Naive thymus-derived CD8-positive, alpha-beta T cell (primary cell): ENCODE measurements at regions of chr1 and their contacts with region 1.

Region 1: DNA sequence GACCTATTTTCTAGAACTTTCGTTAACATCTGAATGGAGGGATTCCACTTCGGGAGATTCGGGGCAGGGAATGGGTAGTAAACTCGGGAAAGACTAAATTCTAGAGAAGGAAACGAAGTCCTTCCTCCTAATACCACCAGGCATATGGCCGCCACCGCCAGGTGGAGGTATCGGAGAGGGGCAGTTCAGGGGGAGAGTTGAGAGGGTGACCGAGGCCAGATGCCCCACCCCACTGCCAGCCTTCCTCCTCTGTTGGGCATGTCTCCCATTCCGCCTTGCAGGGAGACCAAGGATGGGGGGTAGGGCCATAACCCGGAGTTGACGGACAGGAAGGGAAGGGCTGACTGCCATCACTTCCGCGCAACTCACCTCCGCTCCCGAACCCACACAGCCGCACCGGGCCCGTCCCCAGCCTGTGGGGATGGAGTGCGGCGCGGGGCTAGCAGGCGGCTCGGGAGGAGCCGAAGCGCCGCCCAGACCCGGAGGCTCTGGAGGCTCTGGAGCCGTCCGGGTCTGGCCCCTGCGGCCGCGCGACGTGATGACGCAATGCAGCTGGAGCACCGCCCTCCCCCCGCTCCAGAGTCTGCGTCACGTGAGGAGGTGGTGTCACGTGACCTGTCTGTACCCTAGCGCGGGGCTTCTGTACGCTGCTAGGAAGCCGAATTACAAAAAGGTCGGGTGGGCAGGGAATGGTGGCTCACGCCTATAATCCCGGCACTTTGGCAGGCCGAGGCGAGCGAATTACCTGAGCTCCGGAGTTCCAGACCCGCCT is at the start of gene KLHL12:
- DNase-seq: peak; percentile 90 to 97 (median 94)
- ATAC-seq: peak; percentile 93 to 94
- H3K4me3 Mint-ChIP-seq: peak within 1 kb of the TSS; percentile 91 to 96 (median 95)
- H3K27ac Mint-ChIP-seq: peak within 1 kb of the TSS; percentile 90 to 98 (median 95)
- H3K4me1 Mint-ChIP-seq: peaks cover 8 to 42% (median 38%) of the 10 kb centered on the region in 4 donors
- H3K27me3 Mint-ChIP-seq: no peaks in the 10 kb centered on the region
- polyA plus RNA-seq, gene KLHL12: 12.5 to 16.5 (median 15.1) TPM

Region 2: DNA sequence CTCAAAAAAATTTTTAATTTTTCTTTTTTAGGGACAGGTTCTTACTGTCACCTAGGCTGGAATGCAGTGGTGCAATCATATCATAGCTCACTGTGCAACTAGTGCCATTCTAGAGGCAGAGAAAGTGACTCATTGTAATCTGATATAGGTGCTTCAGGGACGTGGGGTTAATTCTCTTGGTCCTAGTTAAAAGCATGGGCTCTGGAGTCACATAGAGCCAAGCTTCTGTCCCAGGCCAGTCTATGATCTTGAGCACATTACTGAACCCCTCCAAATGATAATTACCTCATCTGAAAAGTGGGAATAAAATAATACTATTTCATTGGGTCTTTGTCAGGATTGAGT is 32.3 kb after region 1 on chr1:
- POLR2A ChIA-PET with region 1: interaction called, 15 read pairs
- DNase-seq: no peak
- ATAC-seq: no peak
- H3K4me3 Mint-ChIP-seq: peak overlapping the region in 5 of 10 donors; percentile 86 to 94 (median 89)
- H3K27ac Mint-ChIP-seq: peak overlapping the region in 4 of 10 donors; percentile 81 to 96 (median 92)
- H3K4me1 Mint-ChIP-seq: peaks cover 19 to 42% (median 39%) of the 10 kb centered on the region in 4 donors
- H3K27me3 Mint-ChIP-seq: no peaks in the 10 kb centered on the region

Region 3: GRCh38 chr1:203006948-203007871 is 80.3 kb after region 1 on chr1 and contains the start of gene TMEM183A:
- POLR2A ChIA-PET with region 1: interaction called, 29 read pairs
- DNase-seq: peak; percentile 83 to 98 (median 94)
- ATAC-seq: peak; percentile 92 to 93
- H3K4me3 Mint-ChIP-seq: peak within 1 kb of the TSS; percentile 78 to 98 (median 96)
- H3K27ac Mint-ChIP-seq: peak within 1 kb of the TSS; percentile 94 to 99 (median 98)
- H3K4me1 Mint-ChIP-seq: peaks cover 16 to 47% (median 39%) of the 10 kb centered on the region in 4 donors
- H3K27me3 Mint-ChIP-seq: peaks cover 0 to 1% (median 0%) of the 10 kb centered on the region in 5 donors
- polyA plus RNA-seq, gene TMEM183A: 46.2 to 53.6 (median 47.4) TPM